ENCODE measurements at regions of chr1 and their contacts with region 1.

Region 1: DNA sequence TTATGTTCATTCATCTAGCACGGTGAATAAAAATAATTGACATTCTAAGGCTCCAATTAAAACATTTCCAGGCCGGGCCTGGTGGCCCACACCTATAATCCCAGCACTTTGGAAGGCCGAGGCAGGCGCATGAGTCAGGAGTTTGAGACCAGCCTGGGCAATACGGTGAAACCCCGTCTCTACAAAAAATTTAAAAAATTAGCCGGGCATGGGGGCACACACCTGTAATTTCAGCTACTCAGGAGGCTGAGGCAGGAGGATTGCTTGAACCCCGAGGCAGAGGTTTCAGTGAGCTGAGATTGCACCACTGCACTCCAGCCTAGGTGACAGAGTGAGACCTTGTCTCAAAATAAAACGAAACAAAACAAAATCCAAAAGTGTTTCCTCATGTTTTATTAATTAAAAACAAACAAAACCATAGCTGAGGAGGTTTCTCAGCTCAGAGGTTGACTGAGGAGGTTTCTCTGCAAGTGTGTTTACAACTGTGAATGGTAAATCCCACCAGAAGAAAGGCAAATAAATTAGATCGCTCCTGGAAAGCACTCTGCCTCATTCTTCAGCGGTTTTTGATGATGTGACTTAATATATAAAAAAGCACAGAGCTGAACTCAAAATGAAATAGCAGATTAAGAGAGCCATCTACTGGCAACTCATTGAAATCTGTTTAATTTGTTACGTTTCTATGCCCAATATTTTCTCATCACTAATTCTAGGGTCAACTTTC is 37.7 kb upstream of the ATG4C start:
- DNase-seq: no peak
- ATAC-seq: peak; percentile 70
- H3K4me3 ChIP-seq: no peak overlapping the region
- H3K27ac ChIP-seq: no peak overlapping the region
- H3K4me1 ChIP-seq: no peaks in the 10 kb centered on the region
- H3K27me3 ChIP-seq: no peaks in the 10 kb centered on the region
- CTCF ChIP-seq: peak; percentile 37 to 71 (median 44); a peak in 4 of 6 replicates
- EP300 ChIP-seq: no peak
- POLR2A ChIP-seq: no peak
- RAD21 ChIP-seq: peak; percentile 90

Region 2: DNA sequence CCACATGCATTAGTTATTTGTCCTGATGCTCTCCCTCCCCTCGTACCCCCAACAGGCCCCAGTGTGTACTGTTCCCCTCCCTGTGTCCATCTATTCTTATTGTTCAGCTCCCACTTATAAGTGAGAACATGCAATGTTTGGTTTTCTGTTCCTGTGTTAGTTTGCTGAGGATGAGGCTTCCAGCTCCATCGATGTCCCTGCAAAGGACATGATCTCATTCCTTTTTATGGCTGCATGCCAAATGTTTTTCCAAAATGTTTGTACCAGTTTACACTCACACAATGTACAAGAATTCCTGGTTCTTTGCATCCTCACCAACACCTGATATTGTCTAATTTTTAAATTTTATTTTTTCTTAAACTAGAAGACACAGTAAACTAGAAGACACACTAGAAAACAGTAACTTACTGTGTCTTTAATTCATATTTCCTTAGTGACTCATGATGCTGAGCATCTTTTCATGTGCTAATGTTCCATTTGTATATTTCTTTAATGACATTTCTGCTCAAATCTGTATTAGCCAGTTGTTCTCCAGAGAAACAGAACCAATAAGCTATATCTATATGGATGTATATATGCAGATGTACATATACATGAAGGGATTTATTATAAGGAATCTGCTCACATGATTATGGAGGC is 328.8 kb before region 1 on chr1:
- CTCF ChIA-PET with region 1: interaction called, 12 read pairs
- POLR2A ChIA-PET with region 1: no interaction called
- RAD21 ChIA-PET with region 1: no interaction called
- SMC1A ChIA-PET with region 1: interaction called, 3 read pairs
- in situ Hi-C with region 1: no loop called
- intact Hi-C with region 1: no loop called
- DNase-seq: no peak
- ATAC-seq: no peak
- H3K4me3 ChIP-seq: no peak overlapping the region
- H3K27ac ChIP-seq: no peak overlapping the region
- H3K4me1 ChIP-seq: no peaks in the 10 kb centered on the region
- H3K27me3 ChIP-seq: no peaks in the 10 kb centered on the region; a peak in 1 of 4 replicates
- CTCF ChIP-seq: no peak
- EP300 ChIP-seq: no peak
- POLR2A ChIP-seq: no peak
- RAD21 ChIP-seq: no peak

Region 3: GRCh38 chr1:62493656-62494055 is 252.6 kb before region 1 on chr1:
- CTCF ChIA-PET with region 1: interaction called, 23 read pairs
- POLR2A ChIA-PET with region 1: no interaction called
- RAD21 ChIA-PET with region 1: interaction called, 5 read pairs
- SMC1A ChIA-PET with region 1: interaction called, 15 read pairs
- in situ Hi-C with region 1: no loop called
- intact Hi-C with region 1: no loop called
- DNase-seq: no peak
- ATAC-seq: no peak
- H3K4me3 ChIP-seq: no peak overlapping the region
- H3K27ac ChIP-seq: no peak overlapping the region
- H3K4me1 ChIP-seq: no peaks in the 10 kb centered on the region
- H3K27me3 ChIP-seq: no peaks in the 10 kb centered on the region
- CTCF ChIP-seq: no peak
- EP300 ChIP-seq: no peak
- POLR2A ChIP-seq: no peak
- RAD21 ChIP-seq: no peak

Region 4: DNA sequence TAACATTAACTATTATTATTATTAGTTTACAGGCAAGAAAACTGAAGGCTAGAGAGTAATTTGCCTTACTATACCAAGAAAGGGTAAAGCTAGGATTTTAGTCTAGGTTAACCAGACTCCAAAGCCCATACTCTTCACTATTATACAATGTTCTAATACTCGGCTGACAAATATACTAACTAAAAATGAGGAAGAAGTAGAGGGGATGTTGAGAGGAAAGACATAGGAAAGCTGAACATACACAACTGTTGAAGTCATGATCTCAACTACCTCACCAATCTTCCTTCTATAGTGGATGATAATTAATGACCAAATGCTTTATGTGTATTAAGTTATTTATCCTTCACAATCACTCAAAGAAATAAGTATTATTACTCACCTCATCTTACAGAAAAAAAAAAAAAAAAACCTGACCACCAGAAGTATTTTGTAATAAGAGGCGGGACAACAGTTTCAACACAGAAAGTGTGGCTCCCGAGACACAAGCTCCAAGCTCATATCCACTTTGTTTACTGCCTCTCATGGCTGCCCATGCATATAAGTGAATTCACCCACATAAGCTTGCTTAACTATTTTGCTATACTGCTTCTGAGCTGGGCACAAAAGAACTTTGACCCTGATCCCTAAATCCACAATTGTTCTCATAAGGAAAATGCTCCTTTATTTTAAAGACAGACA is 231.4 kb before region 1 on chr1:
- CTCF ChIA-PET with region 1: interaction called, 305 read pairs
- POLR2A ChIA-PET with region 1: no interaction called
- RAD21 ChIA-PET with region 1: interaction called, 156 read pairs
- SMC1A ChIA-PET with region 1: interaction called, 186 read pairs
- in situ Hi-C with region 1: no loop called
- intact Hi-C with region 1: no loop called
- DNase-seq: no peak
- ATAC-seq: no peak; the same call in 2 of the 3 replicates
- H3K4me3 ChIP-seq: no peak overlapping the region
- H3K27ac ChIP-seq: no peak overlapping the region
- H3K4me1 ChIP-seq: no peaks in the 10 kb centered on the region
- H3K27me3 ChIP-seq: no peaks in the 10 kb centered on the region
- CTCF ChIP-seq: no peak
- EP300 ChIP-seq: no peak
- POLR2A ChIP-seq: no peak
- RAD21 ChIP-seq: no peak

Region 5: GRCh38 chr1:62621907-62622306 is 124.3 kb before region 1 on chr1:
- CTCF ChIA-PET with region 1: interaction called, 9 read pairs
- POLR2A ChIA-PET with region 1: no interaction called
- RAD21 ChIA-PET with region 1: interaction called, 12 read pairs
- SMC1A ChIA-PET with region 1: interaction called, 7 read pairs
- in situ Hi-C with region 1: no loop called
- intact Hi-C with region 1: loop called (anchors 10 kb)
- DNase-seq: peak; percentile 60
- ATAC-seq: peak; percentile 94
- H3K4me3 ChIP-seq: no peak overlapping the region
- H3K27ac ChIP-seq: no peak overlapping the region
- H3K4me1 ChIP-seq: no peaks in the 10 kb centered on the region; the same call in 1 of the 2 replicates
- H3K27me3 ChIP-seq: no peaks in the 10 kb centered on the region
- CTCF ChIP-seq: no peak
- EP300 ChIP-seq: peak; percentile 46 to 55; a peak in 2 of 4 replicates
- POLR2A ChIP-seq: no peak
- RAD21 ChIP-seq: no peak

Region 6: GRCh38 chr1:62735491-62736171 is 10.6 kb before region 1 on chr1:
- CTCF ChIA-PET with region 1: interaction called, 10 read pairs
- POLR2A ChIA-PET with region 1: no interaction called
- RAD21 ChIA-PET with region 1: interaction called, 6 read pairs
- SMC1A ChIA-PET with region 1: interaction called, 18 read pairs
- in situ Hi-C with region 1: no loop called
- intact Hi-C with region 1: no loop called
- DNase-seq: no peak
- ATAC-seq: no peak
- H3K4me3 ChIP-seq: no peak overlapping the region
- H3K27ac ChIP-seq: no peak overlapping the region
- H3K4me1 ChIP-seq: no peaks in the 10 kb centered on the region
- H3K27me3 ChIP-seq: no peaks in the 10 kb centered on the region
- CTCF ChIP-seq: no peak
- EP300 ChIP-seq: no peak
- POLR2A ChIP-seq: no peak
- RAD21 ChIP-seq: no peak

Region 7: GRCh38 chr1:62800825-62801306 is 54.6 kb after region 1 on chr1:
- CTCF ChIA-PET with region 1: no interaction called
- POLR2A ChIA-PET with region 1: no interaction called
- RAD21 ChIA-PET with region 1: no interaction called
- SMC1A ChIA-PET with region 1: no interaction called
- in situ Hi-C with region 1: no loop called
- intact Hi-C with region 1: no loop called
- DNase-seq: peak; percentile 78
- ATAC-seq: peak; percentile 99
- H3K4me3 ChIP-seq: no peak overlapping the region
- H3K27ac ChIP-seq: peak overlapping the region; percentile 49; the same call in 1 of the 2 replicates
- H3K4me1 ChIP-seq: peaks cover 6% of the 10 kb centered on the region
- H3K27me3 ChIP-seq: no peaks in the 10 kb centered on the region
- CTCF ChIP-seq: no peak
- EP300 ChIP-seq: peak in 1 of 2 experiments; percentile 84; a peak in 2 of 4 replicates
- POLR2A ChIP-seq: no peak
- RAD21 ChIP-seq: no peak

Region 8: DNA sequence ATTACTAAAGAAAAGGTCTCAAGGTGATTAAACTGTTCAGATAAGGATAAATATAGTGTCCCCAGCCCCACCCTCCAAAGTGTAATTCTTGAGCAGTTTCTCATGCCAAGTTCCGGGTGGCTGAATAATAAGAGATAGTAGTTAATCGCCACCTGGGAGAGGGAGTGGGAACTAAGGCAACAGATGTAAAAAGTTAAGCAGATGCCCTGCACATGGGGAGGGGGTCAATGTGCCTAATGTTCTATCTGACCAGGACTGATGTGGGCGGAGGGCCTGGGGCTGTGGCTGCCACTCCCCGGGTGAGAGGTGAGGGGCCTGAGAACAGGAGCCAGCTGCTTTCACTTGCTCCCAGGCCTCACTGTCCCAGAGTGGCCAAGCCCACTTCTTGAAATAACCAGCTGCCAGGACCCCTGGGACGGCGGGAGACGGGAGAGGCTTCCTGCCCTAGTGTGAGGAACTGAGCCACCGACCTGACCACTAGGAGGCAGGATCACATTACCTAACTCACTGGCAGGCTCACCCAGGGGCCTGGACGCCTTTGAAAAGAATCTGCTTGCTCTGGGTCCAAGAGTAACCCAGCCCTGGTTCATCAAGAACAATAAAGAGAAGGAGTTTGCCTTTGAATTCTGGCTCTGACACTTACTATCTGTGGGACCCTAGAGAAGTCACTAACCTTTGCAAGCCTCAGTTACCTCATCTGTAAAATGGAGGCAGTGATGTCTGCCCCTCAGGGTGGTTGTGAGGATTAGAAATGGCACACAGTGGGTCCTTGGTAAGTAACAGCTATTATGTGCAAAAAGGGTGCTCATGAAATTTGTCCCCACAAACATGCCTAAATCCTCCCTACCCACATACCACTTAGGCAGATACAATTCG is 216.9 kb after region 1 on chr1:
- CTCF ChIA-PET with region 1: no interaction called
- POLR2A ChIA-PET with region 1: no interaction called
- RAD21 ChIA-PET with region 1: no interaction called
- SMC1A ChIA-PET with region 1: no interaction called
- in situ Hi-C with region 1: no loop called
- intact Hi-C with region 1: no loop called
- DNase-seq: no peak
- ATAC-seq: peak; percentile 92
- H3K4me3 ChIP-seq: no peak overlapping the region
- H3K27ac ChIP-seq: no peak overlapping the region
- H3K4me1 ChIP-seq: peaks cover 10% of the 10 kb centered on the region
- H3K27me3 ChIP-seq: no peaks in the 10 kb centered on the region
- CTCF ChIP-seq: peak; percentile 67 to 71 (median 68)
- EP300 ChIP-seq: no peak
- POLR2A ChIP-seq: no peak
- RAD21 ChIP-seq: peak; percentile 75

Region 9: GRCh38 chr1:63000508-63000907 is 254.3 kb after region 1 on chr1:
- CTCF ChIA-PET with region 1: no interaction called
- POLR2A ChIA-PET with region 1: no interaction called
- RAD21 ChIA-PET with region 1: no interaction called
- SMC1A ChIA-PET with region 1: no interaction called
- in situ Hi-C with region 1: no loop called
- intact Hi-C with region 1: no loop called
- DNase-seq: no peak
- ATAC-seq: no peak
- H3K4me3 ChIP-seq: no peak overlapping the region
- H3K27ac ChIP-seq: no peak overlapping the region
- H3K4me1 ChIP-seq: no peaks in the 10 kb centered on the region
- H3K27me3 ChIP-seq: peaks cover 0 to 1% of the 10 kb centered on the region in 2 experiments; a peak in 2 of 4 replicates
- CTCF ChIP-seq: no peak
- EP300 ChIP-seq: no peak
- POLR2A ChIP-seq: no peak
- RAD21 ChIP-seq: no peak